Pancreas (tissue), 10 donors: ENCODE measurements at regions of chr13 and their contacts with region 1.

Region 1: DNA sequence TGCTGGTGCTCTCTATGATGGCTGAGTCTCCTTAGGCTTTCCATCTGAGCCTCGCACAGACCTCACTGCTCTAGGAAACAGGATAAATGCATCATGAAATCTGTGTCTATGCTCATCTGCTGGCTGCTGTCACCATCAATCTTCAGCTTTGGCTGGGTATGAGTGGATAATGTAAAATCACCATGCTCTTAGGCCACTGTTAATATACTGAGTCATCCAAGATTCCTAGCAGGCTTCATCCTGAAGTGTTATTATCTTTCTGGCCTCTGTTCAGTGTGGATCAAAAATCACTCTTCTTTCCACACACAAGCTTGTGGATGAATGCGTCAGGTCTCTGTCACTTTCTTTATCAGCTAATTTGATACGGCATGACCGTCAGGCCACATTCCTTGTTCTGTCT is 317.4 kb downstream of the NALCN start:
- DNase-seq: no peak
- ATAC-seq: no peak
- H3K4me3 ChIP-seq: no peak overlapping the region
- H3K27ac ChIP-seq: no peak overlapping the region
- H3K4me1 ChIP-seq: no peaks in the 10 kb centered on the region
- H3K27me3 ChIP-seq: no peaks in the 10 kb centered on the region
- CTCF ChIP-seq: no peak

Region 2: GRCh38 chr13:100721885-100722512 is 376.9 kb before region 1 on chr13:
- intact Hi-C with region 1: loop called in 2 of 3 experiments (anchors 10 kb)
- DNase-seq: peak in 5 of 6 donors; percentile 27 to 67 (median 54)
- ATAC-seq: peak; percentile 71 to 86 (median 79)
- H3K4me3 ChIP-seq: no peak overlapping the region
- H3K27ac ChIP-seq: no peak overlapping the region
- H3K4me1 ChIP-seq: peaks cover 0 to 19% (median 4%) of the 10 kb centered on the region in 3 donors
- H3K27me3 ChIP-seq: no peaks in the 10 kb centered on the region
- CTCF ChIP-seq: peak; percentile 12 to 69 (median 65)

Region 3: DNA sequence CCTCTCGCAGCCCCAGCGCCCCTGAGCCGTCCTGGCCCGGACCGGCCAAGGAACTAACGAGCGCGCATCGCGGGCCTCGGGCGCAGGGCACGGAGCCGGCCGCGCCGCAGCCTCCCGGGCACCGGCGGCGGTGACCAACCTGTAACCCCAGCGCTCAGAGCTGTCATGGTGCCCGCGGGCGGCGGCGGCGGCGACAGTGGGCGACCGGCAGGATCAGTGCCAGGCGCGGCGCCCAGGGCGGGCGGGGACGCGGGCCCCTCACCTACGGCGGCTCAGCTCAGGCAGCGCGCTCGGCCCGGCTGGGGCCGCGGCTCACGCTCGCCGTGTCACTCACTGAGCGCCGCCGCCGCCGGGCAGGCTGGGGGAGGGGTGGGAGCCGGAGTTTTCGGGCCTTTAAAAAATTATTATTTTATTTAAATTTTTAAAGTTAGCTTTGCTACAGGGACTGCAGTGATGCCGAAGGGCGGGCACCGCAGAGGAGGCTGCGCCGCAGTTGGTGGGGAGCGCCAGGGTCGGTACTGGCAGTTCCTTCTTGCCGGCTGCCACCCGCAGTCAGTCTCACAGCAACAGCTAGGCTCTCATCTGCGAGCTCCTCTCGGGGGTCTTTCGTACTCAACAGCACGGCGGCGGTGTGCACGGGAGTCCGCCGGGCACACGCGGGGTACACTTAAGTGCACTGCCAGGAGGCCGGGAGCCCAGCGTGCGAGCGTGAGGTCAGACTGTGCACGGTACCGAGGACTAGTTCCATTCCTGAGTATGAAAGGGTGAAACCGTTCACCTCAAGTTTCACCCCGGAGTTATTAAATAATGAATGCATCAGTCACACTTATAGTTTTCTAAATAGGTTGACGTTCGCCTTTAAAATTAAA is 317.5 kb after region 1 on chr13 and contains the start of gene NALCN:
- intact Hi-C with region 1: no loop called
- DNase-seq: peak; percentile 26 to 77 (median 36)
- ATAC-seq: peak; percentile 89 to 92 (median 90)
- H3K4me3 ChIP-seq: peak within 1 kb of the TSS; percentile 43 to 64 (median 46)
- H3K27ac ChIP-seq: peak within 1 kb of the TSS in 2 of 4 donors; percentile 5 to 11
- H3K4me1 ChIP-seq: peaks cover 0 to 5% (median 3%) of the 10 kb centered on the region in 3 donors
- H3K27me3 ChIP-seq: no peaks in the 10 kb centered on the region
- CTCF ChIP-seq: no peak
- total RNA-seq, gene NALCN: 0.51 to 5.1 (median 1.2) TPM